Breast epithelium (tissue), 4 donors: ENCODE measurements at regions of chr4 and their contacts with region 1.

Region 1: DNA sequence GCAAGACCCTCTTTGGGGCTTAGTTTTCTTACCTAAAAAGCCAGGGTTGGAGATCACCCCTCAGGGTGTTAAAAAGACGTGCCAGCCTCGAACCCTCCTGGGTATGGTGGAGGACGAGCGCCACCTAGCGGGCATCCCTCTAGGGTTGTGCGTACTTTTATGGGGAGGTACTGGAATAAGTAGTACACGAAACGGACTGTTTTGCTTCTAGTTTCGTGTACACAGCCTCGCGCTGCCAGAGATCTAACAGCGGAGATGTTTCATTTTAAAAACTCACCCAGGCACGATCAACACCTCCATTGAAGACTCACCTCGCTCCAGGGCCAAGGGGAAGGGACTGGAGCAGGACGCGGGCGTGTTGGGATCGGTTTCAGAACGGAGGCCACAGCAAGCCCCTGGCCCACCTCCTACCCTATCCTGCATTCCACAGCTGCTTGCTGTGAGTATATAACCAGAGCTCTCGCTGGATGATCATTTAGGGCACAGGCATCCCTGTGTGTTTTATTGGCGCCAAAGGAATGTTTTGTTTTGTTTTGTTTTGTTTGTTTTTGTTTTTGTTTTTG is 4.8 kb upstream of the NKX3-2 start:
- DNase-seq: peak; percentile 56 to 68
- H3K4me3 ChIP-seq: peak overlapping the region in 2 of 3 donors; percentile 20 to 56
- H3K27ac ChIP-seq: no peak overlapping the region
- H3K4me1 ChIP-seq: peaks cover 6 to 7% of the 10 kb centered on the region in 2 donors
- H3K27me3 ChIP-seq: peaks cover 19 to 61% of the 10 kb centered on the region in 2 donors
- CTCF ChIP-seq: peak in 2 of 3 donors; percentile 67 to 84
- POLR2A ChIP-seq: no peak

Region 2: DNA sequence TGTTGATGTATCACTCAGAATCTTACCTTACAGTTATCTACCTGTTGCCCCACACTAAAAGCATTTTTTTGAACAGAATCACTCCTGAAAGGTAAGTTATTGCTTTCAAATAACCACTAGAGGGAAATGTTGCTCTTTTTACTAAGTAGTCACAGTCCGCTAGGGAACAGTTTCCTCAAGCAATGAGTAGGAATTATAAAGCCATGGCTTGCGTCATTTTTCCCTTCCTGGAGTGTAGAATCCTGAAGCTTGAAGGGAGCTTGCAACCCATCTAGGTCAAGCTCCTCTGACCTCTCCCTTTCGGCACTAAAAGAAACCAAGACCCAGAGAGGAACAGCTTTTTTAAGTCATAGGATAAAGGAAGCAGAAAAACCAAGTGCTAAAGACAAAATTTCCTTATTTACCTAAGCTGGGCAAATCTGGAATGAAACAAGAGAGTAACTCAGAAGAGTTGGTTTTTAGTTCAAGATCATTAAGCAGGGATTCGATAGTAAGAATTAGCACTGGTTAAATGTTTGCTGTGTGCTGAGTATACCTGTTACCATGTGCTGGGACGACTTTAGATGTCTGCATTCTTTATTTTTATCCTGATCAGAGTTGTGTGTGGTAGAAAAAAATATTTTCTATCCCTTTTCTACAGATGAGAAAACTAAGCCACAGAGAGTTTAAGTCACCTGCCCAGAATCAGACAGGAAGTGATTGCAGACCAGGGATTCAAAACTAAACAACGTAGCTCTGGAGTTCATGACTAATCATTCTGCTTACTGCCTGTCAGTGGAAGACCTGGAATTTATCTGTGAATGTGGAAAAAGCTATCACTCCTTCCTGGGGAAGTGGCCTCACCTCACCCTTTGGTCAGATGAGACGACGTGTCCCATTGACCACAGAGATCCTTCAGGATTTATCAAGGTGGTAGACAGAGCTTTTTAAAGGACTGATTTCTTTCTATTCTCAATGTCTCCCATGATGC is 696.4 kb before region 1 on chr4:
- intact Hi-C with region 1: loop called (anchors 10 kb)
- DNase-seq: no peak
- H3K4me3 ChIP-seq: no peak overlapping the region
- H3K27ac ChIP-seq: no peak overlapping the region
- H3K4me1 ChIP-seq: no peaks in the 10 kb centered on the region
- H3K27me3 ChIP-seq: peaks cover 0 to 13% of the 10 kb centered on the region in 2 donors
- CTCF ChIP-seq: peak in 2 of 3 donors; percentile 49 to 72
- POLR2A ChIP-seq: no peak

Region 3: GRCh38 chr4:12911750-12912358 is 637.2 kb before region 1 on chr4:
- intact Hi-C with region 1: no loop called
- DNase-seq: no peak
- H3K4me3 ChIP-seq: no peak overlapping the region
- H3K27ac ChIP-seq: no peak overlapping the region
- H3K4me1 ChIP-seq: no peaks in the 10 kb centered on the region
- H3K27me3 ChIP-seq: no peaks in the 10 kb centered on the region
- CTCF ChIP-seq: no peak
- POLR2A ChIP-seq: no peak

Region 4: GRCh38 chr4:13193662-13194061 is 355.4 kb before region 1 on chr4:
- intact Hi-C with region 1: loop called (anchors 5 kb)
- DNase-seq: no peak
- H3K4me3 ChIP-seq: no peak overlapping the region
- H3K27ac ChIP-seq: no peak overlapping the region
- H3K4me1 ChIP-seq: no peaks in the 10 kb centered on the region
- H3K27me3 ChIP-seq: no peaks in the 10 kb centered on the region
- CTCF ChIP-seq: no peak
- POLR2A ChIP-seq: no peak

Region 5: GRCh38 chr4:13700196-13701140 is 151.4 kb after region 1 on chr4:
- intact Hi-C with region 1: no loop called
- DNase-seq: no peak
- H3K4me3 ChIP-seq: no peak overlapping the region
- H3K27ac ChIP-seq: no peak overlapping the region
- H3K4me1 ChIP-seq: peaks cover 0 to 8% of the 10 kb centered on the region in 2 donors
- H3K27me3 ChIP-seq: no peaks in the 10 kb centered on the region
- CTCF ChIP-seq: no peak
- POLR2A ChIP-seq: no peak